Heart left ventricle (tissue), 16 donors: ENCODE measurements at regions of chr5 and their contacts with region 1.

Region 1: DNA sequence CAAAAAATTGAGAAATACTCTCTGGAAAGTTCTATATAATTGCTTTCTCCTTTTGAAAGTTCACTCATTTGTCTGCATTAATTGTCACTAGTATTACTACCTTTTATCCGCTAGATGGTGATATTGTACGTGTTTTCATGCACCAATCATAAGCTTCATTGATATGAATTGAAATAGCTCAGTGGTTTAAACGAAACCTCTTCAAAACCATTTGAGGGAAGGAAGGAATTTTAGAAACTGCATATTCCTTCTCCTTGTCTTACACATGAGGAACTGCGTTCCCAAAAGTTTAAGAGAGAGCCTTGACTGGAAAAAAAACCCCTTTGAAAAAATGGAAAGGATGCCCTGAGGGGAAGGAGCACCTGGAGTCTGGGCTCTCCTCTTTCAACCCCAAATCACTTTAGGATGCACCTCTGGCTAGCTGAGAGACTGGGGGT is 98.6 kb downstream of the YTHDC2 start:
- DNase-seq: no peak
- ATAC-seq: peak in 1 of 4 donors; percentile 38
- H3K4me3 ChIP-seq: no peak overlapping the region
- H3K27ac ChIP-seq: no peak overlapping the region
- H3K4me1 ChIP-seq: peaks cover 0 to 6% (median 0%) of the 10 kb centered on the region in 12 donors
- H3K27me3 ChIP-seq: no peaks in the 10 kb centered on the region
- CTCF ChIP-seq: peak; percentile 52 to 70 (median 66)
- POLR2A ChIP-seq: no peak

Region 2: GRCh38 chr5:113663880-113664541 is 51.9 kb after region 1 on chr5:
- intact Hi-C with region 1: no loop called
- DNase-seq: peak in 3 of 5 donors; percentile 18 to 62 (median 36)
- ATAC-seq: no peak
- H3K4me3 ChIP-seq: no peak overlapping the region
- H3K27ac ChIP-seq: no peak overlapping the region
- H3K4me1 ChIP-seq: no peaks in the 10 kb centered on the region
- H3K27me3 ChIP-seq: peaks cover 0 to 7% (median 0%) of the 10 kb centered on the region in 9 donors
- CTCF ChIP-seq: peak in 4 of 12 donors; percentile 13 to 37 (median 27)
- POLR2A ChIP-seq: no peak

Region 3: DNA sequence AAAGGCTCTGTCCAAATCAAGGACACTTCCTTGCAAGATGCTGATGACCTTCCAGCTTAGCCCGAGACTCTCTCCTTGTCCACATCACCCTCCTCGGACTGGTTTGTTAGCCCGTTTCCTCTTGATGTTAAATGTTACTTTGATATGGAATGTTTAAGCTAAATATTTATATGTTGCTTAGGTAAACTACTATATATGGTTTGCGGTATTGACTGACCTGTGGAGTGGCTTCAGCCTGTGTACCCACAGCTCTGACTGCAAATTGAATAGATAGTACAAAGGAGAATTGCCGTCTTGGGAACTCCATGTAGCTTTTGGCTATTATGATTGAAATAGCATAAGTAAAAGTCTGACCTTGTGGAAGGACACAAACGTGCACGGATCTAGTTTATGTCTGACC is 323.4 kb after region 1 on chr5:
- intact Hi-C with region 1: no loop called
- DNase-seq: no peak
- ATAC-seq: no peak
- H3K4me3 ChIP-seq: no peak overlapping the region
- H3K27ac ChIP-seq: no peak overlapping the region
- H3K4me1 ChIP-seq: no peaks in the 10 kb centered on the region
- H3K27me3 ChIP-seq: no peaks in the 10 kb centered on the region
- CTCF ChIP-seq: no peak
- POLR2A ChIP-seq: no peak

Region 4: DNA sequence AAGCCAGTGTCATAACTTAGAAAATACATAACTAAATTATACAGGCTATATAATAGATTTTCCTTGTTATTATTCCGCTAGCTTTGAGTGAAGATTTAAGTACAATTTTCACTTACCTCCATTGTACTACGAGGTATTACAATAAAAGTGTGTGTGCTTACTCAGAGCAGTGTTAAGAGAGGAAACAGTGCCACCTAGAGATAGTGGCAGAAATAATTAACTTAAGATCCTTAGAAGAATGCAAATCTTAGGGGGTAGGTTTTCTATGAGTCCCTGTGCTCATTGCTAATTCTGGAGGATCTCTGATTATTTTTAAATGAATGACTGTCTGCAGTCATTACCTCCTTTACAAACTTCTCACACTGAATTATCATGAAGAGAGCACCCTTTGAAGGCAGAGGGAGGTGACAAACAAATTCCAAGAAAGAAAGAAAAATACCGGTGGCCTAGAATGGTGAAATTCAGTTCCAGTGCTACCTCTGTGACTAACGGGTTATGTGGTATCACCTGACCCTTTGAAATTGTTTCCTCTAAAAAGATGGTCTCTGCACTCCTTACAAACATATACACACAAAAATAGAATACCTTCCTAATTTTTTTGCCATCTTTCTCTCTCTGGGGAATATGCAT is 1177.8 kb after region 1 on chr5:
- intact Hi-C with region 1: loop called in 1 of 10 experiments (anchors 5 kb)
- DNase-seq: no peak
- ATAC-seq: peak in 1 of 4 donors; percentile 29
- H3K4me3 ChIP-seq: no peak overlapping the region
- H3K27ac ChIP-seq: no peak overlapping the region
- H3K4me1 ChIP-seq: no peaks in the 10 kb centered on the region
- H3K27me3 ChIP-seq: peaks cover 0 to 21% (median 0%) of the 10 kb centered on the region in 9 donors
- CTCF ChIP-seq: peak in 10 of 12 donors; percentile 20 to 55 (median 36)
- POLR2A ChIP-seq: no peak

Region 5: GRCh38 chr5:115069087-115069968 is 1457.2 kb after region 1 on chr5:
- intact Hi-C with region 1: loop called in 5 of 10 experiments (anchors 5 to 10 kb)
- DNase-seq: peak in 1 of 5 donors; percentile 8
- ATAC-seq: peak in 1 of 4 donors; percentile 39
- H3K4me3 ChIP-seq: no peak overlapping the region
- H3K27ac ChIP-seq: no peak overlapping the region
- H3K4me1 ChIP-seq: no peaks in the 10 kb centered on the region
- H3K27me3 ChIP-seq: peaks cover 0 to 13% (median 0%) of the 10 kb centered on the region in 9 donors
- CTCF ChIP-seq: peak; percentile 24 to 64 (median 46)
- POLR2A ChIP-seq: no peak

Region 6: GRCh38 chr5:115246361-115246991 is 1634.4 kb after region 1 on chr5:
- intact Hi-C with region 1: loop called in 2 of 10 experiments (anchors 10 kb)
- DNase-seq: no peak
- ATAC-seq: peak in 1 of 4 donors; percentile 55
- H3K4me3 ChIP-seq: no peak overlapping the region
- H3K27ac ChIP-seq: no peak overlapping the region
- H3K4me1 ChIP-seq: peaks cover 0 to 27% (median 11%) of the 10 kb centered on the region in 12 donors
- H3K27me3 ChIP-seq: no peaks in the 10 kb centered on the region
- CTCF ChIP-seq: peak; percentile 59 to 80 (median 68)
- POLR2A ChIP-seq: no peak